A549 (cell line): ENCODE measurements at regions of chr11 and their contacts with region 1.

Region 1: GRCh38 chr11:554824-555472 is 5.6 kb downstream of the LMNTD2 start:
- DNase-seq: peak; percentile 69 to 81
- ATAC-seq: peak; percentile 48 to 72; a peak in 5 of 6 replicates
- H3K4me3 ChIP-seq: peak overlapping the region; percentile 67
- H3K27ac ChIP-seq: peak overlapping the region; percentile 81 to 88
- H3K4me1 ChIP-seq: peaks cover 22% of the 10 kb centered on the region
- CTCF ChIP-seq: peak; percentile 52
- EP300 ChIP-seq: no peak
- POLR2A ChIP-seq: no peak
- RAD21 ChIP-seq: peak; percentile 71 to 84

Region 2: DNA sequence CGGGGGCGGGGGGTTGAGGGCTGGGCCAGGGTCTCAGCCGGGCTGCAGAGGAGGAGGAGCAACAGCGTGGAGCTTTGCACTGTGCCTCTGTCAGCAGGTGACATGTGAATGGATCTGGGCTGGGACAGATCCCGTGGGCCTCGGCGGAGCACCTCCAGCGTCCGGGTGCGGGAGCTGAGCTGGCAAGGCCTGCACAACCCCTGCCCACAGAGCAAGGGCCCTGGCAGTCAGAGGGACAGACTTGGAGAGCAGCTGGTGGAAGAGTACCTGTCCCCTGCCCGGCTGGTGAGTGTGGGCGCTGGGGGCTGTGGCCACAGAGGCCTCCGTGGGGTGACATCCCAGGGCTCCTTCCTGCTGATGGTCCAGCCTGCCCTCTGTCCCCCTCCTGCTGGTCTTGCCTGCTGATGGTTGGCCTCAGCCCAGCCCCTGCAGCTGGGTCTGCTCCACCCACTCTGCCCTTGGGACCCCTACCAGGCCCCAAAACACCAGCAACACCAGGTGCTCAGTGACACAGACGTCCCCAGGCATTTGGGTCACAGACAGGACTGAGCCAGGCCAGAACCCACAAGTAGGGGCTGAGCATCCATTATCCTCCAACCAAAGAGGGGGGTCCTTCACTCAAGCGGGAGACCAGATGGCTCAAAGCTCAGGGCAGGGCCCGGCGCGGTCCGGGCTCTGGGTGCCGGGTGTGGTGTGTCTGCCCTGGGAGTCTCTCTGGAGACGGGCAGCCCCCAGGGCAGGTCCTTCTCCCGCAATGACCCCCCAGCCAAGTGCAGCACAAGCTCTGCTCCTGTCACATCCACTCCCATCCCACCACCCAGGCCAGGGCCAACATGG is 14.2 kb before region 1 on chr11:
- CTCF ChIA-PET with region 1: interaction called, 26 read pairs
- POLR2A ChIA-PET with region 1: no interaction called
- DNase-seq: no peak
- ATAC-seq: no peak
- H3K4me3 ChIP-seq: no peak overlapping the region
- H3K27ac ChIP-seq: no peak overlapping the region
- H3K4me1 ChIP-seq: 0 out of 3 replicates have a peak, but pooled peaks cover 3% of the 10 kb centered on the region
- CTCF ChIP-seq: no peak
- EP300 ChIP-seq: no peak
- POLR2A ChIP-seq: no peak
- RAD21 ChIP-seq: no peak

Region 3: GRCh38 chr11:568306-569157 is 13.6 kb after region 1 on chr11:
- CTCF ChIA-PET with region 1: interaction called, 66 read pairs
- POLR2A ChIA-PET with region 1: interaction called, 4 read pairs
- DNase-seq: peak; percentile 90 to 97
- ATAC-seq: peak; percentile 89 to 90
- H3K4me3 ChIP-seq: peak overlapping the region; percentile 91
- H3K27ac ChIP-seq: peak overlapping the region; percentile 95 to 97
- H3K4me1 ChIP-seq: peaks cover 14% of the 10 kb centered on the region
- CTCF ChIP-seq: no peak
- EP300 ChIP-seq: no peak
- POLR2A ChIP-seq: peak; percentile 62
- RAD21 ChIP-seq: no peak